ENCODE measurements at regions of chr17 and their contacts with region 1.

Region 1: GRCh38 chr17:50094753-50095619 is at the start of gene PDK2:
- DNase-seq: peak; percentile 92
- ATAC-seq: peak; percentile 94
- H3K4me3 ChIP-seq: peak within 1 kb of the TSS; percentile 91
- H3K27ac ChIP-seq: peak within 1 kb of the TSS; percentile 60
- H3K4me1 ChIP-seq: peaks cover 5% of the 10 kb centered on the region; the same call in 1 of the 2 replicates
- H3K27me3 ChIP-seq: no peaks in the 10 kb centered on the region
- CTCF ChIP-seq: no peak
- POLR2A ChIP-seq: no peak
- RAD21 ChIP-seq: no peak
- total RNA-seq, gene PDK2: 26.7 and 38.0 TPM in 2 replicates

Region 2: GRCh38 chr17:50026901-50027630 is 67.9 kb before region 1 on chr17:
- CTCF ChIA-PET with region 1: interaction called, 4 read pairs
- POLR2A ChIA-PET with region 1: interaction called, 4 read pairs
- dilution Hi-C with region 1: no loop called
- in situ Hi-C with region 1: no loop called
- intact Hi-C with region 1: loop called (anchors 2 kb)
- DNase-seq: peak; percentile 75
- ATAC-seq: peak; percentile 74
- H3K4me3 ChIP-seq: peak overlapping the region; percentile 18
- H3K27ac ChIP-seq: peak overlapping the region; percentile 87
- H3K4me1 ChIP-seq: peaks cover 22% of the 10 kb centered on the region
- H3K27me3 ChIP-seq: no peaks in the 10 kb centered on the region
- CTCF ChIP-seq: peak; percentile 97
- POLR2A ChIP-seq: 0 out of 2 replicates have a peak, but pooled peaks have one; percentile 41
- RAD21 ChIP-seq: peak; percentile 95

Region 3: GRCh38 chr17:50151041-50151936 is 56.3 kb after region 1 on chr17:
- CTCF ChIA-PET with region 1: no interaction called
- POLR2A ChIA-PET with region 1: no interaction called
- dilution Hi-C with region 1: no loop called
- in situ Hi-C with region 1: no loop called
- intact Hi-C with region 1: loop called (anchors 2 kb)
- DNase-seq: peak; percentile 89
- ATAC-seq: peak; percentile 71
- H3K4me3 ChIP-seq: peak overlapping the region; percentile 86
- H3K27ac ChIP-seq: peak overlapping the region; percentile 97
- H3K4me1 ChIP-seq: peaks cover 24% of the 10 kb centered on the region
- H3K27me3 ChIP-seq: no peaks in the 10 kb centered on the region
- CTCF ChIP-seq: peak; percentile 75
- POLR2A ChIP-seq: 0 out of 2 replicates have a peak, but pooled peaks have one; percentile 24
- RAD21 ChIP-seq: no peak

Region 4: GRCh38 chr17:50161023-50161910 is 66.3 kb after region 1 on chr17:
- CTCF ChIA-PET with region 1: interaction called, 12 read pairs
- POLR2A ChIA-PET with region 1: no interaction called
- dilution Hi-C with region 1: no loop called
- in situ Hi-C with region 1: no loop called
- intact Hi-C with region 1: loop called (anchors 1 kb)
- DNase-seq: peak; percentile 90
- ATAC-seq: peak; percentile 96
- H3K4me3 ChIP-seq: peak overlapping the region; percentile 61
- H3K27ac ChIP-seq: peak overlapping the region; percentile 46
- H3K4me1 ChIP-seq: peaks cover 5% of the 10 kb centered on the region; the same call in 1 of the 2 replicates
- H3K27me3 ChIP-seq: no peaks in the 10 kb centered on the region
- CTCF ChIP-seq: peak; percentile 97
- POLR2A ChIP-seq: peak; percentile 58
- RAD21 ChIP-seq: peak; percentile 72

Region 5: DNA sequence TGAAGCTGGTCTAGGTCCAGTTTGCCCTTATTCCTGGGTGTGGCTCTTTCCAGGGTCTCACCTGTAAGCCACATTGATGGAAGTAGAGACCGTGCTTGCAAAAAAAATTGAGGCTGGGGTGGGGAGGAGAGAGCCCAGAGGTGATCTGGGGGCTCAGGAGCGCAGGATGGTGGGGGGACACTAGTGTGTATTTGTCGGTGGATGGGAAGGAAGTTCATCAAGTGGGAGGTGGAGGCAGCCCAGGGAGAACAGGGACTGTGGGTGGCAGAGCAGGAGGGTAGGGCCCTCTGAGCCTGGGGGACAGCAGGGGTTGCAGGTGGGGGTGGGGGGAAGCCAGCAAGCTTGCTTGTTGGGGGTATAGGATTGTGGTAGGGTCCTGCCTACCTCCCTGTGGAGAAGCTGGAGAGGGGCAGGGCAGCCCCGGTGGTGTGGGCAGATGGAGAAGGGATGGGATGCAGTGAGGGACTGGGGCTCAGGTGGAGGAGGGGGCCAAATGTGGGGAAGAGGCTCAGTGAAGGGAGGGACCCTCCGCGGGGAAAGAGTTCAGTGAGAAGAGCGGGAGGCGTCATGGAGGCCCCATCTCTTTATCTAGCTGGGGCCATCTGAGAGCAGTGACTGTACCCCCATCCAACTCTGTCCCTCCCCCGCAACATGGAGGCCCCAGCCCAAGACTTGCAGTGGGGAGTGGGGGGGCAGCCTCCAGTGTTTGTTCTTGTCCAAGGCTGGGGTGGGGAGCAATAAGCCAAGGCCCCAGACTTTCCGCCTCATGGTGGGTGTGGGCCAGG is 162.0 kb after region 1 on chr17:
- CTCF ChIA-PET with region 1: no interaction called
- POLR2A ChIA-PET with region 1: no interaction called
- dilution Hi-C with region 1: no loop called
- in situ Hi-C with region 1: no loop called
- intact Hi-C with region 1: no loop called
- DNase-seq: no peak
- ATAC-seq: no peak
- H3K4me3 ChIP-seq: no peak overlapping the region
- H3K27ac ChIP-seq: no peak overlapping the region
- H3K4me1 ChIP-seq: peaks cover 4% of the 10 kb centered on the region; the same call in 1 of the 2 replicates
- H3K27me3 ChIP-seq: no peaks in the 10 kb centered on the region
- CTCF ChIP-seq: no peak
- POLR2A ChIP-seq: no peak
- RAD21 ChIP-seq: no peak

Region 6: DNA sequence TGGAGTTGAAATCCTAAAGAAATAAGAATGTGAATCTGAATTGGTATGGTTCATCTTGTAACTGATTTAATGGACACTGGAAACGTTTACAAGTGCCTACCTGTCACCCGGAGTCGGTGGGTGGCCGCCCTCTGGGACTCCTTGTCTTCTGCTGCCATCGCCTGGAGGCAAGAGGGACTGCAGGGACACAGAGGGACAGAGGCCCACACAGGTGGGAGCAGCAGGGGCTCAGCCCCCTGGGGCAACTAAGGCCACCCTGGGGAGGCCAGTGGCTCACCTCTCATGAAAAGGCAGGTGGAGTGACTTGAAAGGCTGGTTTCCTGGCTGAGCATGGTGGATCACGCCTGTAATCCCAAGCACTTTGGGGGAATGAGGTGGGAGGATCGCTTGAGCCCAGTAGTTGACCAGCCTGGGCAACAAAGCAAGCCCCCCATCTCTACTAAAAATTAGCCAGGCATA is 202.4 kb after region 1 on chr17:
- CTCF ChIA-PET with region 1: interaction called, 15 read pairs
- POLR2A ChIA-PET with region 1: interaction called, 3 read pairs
- dilution Hi-C with region 1: no loop called
- in situ Hi-C with region 1: loop called (anchors 5 kb)
- intact Hi-C with region 1: loop called (anchors 1 kb)
- DNase-seq: peak; percentile 63
- ATAC-seq: peak; percentile 91
- H3K4me3 ChIP-seq: no peak overlapping the region
- H3K27ac ChIP-seq: no peak overlapping the region
- H3K4me1 ChIP-seq: no peaks in the 10 kb centered on the region; the same call in none of the 2 replicates
- H3K27me3 ChIP-seq: no peaks in the 10 kb centered on the region
- CTCF ChIP-seq: peak; percentile 95
- POLR2A ChIP-seq: 0 out of 2 replicates have a peak, but pooled peaks have one; percentile 47
- RAD21 ChIP-seq: peak; percentile 98

Measured in IMR-90 (cell line).